ENCODE measurements at regions of chr18 and their contacts with region 1.

Region 1: GRCh38 chr18:21612125-21612991 is at the start of gene SNRPD1:
- DNase-seq: peak; percentile 73 to 94 (median 86)
- ATAC-seq: peak; percentile 99
- H3K4me3 ChIP-seq: peak within 1 kb of the TSS; percentile 85
- H3K4me3 Mint-ChIP-seq: peak within 1 kb of the TSS; percentile 100
- H3K27ac ChIP-seq: peak within 1 kb of the TSS; percentile 86 to 90
- H3K27ac Mint-ChIP-seq: peak within 1 kb of the TSS; percentile 94
- H3K4me1 ChIP-seq: peaks cover 26% of the 10 kb centered on the region
- H3K4me1 Mint-ChIP-seq: peaks cover 44% of the 10 kb centered on the region
- H3K27me3 ChIP-seq: no peaks in the 10 kb centered on the region
- H3K27me3 Mint-ChIP-seq: no peaks in the 10 kb centered on the region
- CTCF ChIP-seq: peak; percentile 86
- total RNA-seq, gene SNRPD1: 35.7 to 38.9 TPM

Region 2: GRCh38 chr18:21682371-21683051 is 70.2 kb after region 1 on chr18:
- CTCF ChIA-PET with region 1: interaction called, 3 read pairs
- POLR2A ChIA-PET with region 1: interaction called, 11 read pairs
- intact Hi-C with region 1: no loop called
- DNase-seq: peak in 8 of 14 experiments; percentile 2 to 73 (median 28)
- ATAC-seq: peak; percentile 87
- H3K4me3 ChIP-seq: peak overlapping the region; percentile 57
- H3K4me3 Mint-ChIP-seq: no peak overlapping the region
- H3K27ac ChIP-seq: peak overlapping the region; percentile 47 to 87
- H3K27ac Mint-ChIP-seq: no peak overlapping the region
- H3K4me1 ChIP-seq: peaks cover 14% of the 10 kb centered on the region
- H3K4me1 Mint-ChIP-seq: peaks cover 28% of the 10 kb centered on the region
- H3K27me3 ChIP-seq: no peaks in the 10 kb centered on the region
- H3K27me3 Mint-ChIP-seq: no peaks in the 10 kb centered on the region
- CTCF ChIP-seq: no peak

Region 3: DNA sequence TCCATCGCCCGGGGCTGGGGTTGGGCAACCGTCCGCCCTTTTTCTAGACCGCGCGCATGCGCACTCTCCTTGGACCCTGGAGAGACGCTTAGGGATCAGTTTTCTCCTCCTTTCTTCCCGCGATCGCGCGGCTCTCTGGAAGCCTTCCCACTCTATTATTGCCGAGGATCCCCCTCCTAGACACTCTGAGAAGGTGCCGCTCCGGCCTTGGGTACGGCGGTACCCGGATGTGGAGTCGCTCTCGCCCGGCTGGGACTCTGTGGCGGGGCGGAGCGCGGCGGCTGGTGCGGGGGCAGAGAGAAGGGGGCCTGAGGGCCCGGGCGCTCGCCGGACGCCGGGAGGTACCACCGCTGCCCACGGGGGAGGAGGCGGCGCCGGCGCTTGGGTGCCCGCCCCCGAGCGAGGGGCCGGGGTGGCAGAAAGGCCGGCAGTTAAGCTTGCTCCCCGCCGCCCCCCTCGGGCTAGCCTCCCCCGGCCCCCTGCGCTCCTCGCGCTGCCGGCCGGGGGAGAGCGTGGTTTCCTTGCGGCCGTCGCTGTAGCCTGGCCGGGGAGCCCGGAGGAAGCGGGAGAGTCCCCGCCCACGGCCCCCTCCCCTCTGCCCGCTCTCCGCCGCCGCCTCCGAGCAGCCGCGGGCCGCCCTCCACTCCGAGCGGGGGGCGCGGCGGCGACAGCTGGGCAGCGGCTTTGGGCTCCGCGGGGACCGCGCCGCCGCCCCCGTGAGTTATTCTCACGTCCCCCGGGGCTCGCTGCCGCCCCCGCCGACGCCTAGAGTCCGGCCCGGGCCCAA is 128.6 kb after region 1 on chr18 and contains the start of gene MIB1:
- CTCF ChIA-PET with region 1: interaction called, 6 read pairs
- POLR2A ChIA-PET with region 1: interaction called, 27 read pairs
- intact Hi-C with region 1: loop called in 1 of 2 experiments (anchors 5 kb)
- DNase-seq: peak in 11 of 14 experiments; percentile 25 to 99 (median 76)
- ATAC-seq: peak; percentile 57
- H3K4me3 ChIP-seq: peak within 1 kb of the TSS; percentile 94
- H3K4me3 Mint-ChIP-seq: peak within 1 kb of the TSS; percentile 98
- H3K27ac ChIP-seq: peak within 1 kb of the TSS; percentile 87 to 95
- H3K27ac Mint-ChIP-seq: peak within 1 kb of the TSS; percentile 93
- H3K4me1 ChIP-seq: peaks cover 34% of the 10 kb centered on the region
- H3K4me1 Mint-ChIP-seq: peaks cover 44% of the 10 kb centered on the region
- H3K27me3 ChIP-seq: no peaks in the 10 kb centered on the region
- H3K27me3 Mint-ChIP-seq: no peaks in the 10 kb centered on the region
- CTCF ChIP-seq: no peak
- total RNA-seq, gene MIB1: 13.6 to 15.3 TPM

Region 4: DNA sequence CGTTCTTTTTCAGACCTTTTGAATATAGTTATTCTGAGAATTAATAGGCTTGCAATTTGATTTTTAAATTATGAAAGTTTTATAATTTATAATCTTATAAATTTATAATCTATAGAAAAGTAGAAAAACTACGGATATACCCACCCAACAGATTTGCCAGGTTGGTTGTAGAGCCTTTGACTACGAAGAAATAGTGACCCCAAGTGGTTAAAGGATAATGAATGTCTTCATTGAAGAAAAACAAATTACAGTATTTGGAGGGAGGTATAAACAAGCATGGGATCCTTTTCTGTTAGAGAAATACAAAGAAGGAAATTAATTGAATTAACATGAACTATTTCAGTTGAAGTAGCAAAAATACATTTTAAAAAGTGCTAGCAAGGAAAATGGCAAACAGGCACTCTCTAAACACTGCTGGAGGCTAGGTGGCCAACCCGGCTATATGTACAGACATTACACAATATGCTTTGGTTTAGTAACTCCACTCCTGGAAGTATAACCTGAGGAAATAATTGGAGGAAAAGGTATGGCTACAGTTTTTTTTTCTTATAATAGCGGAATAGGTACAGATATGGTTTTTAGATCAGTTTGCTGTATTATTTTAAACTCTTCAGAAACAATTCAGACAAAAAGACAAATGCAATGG is 239.1 kb after region 1 on chr18:
- CTCF ChIA-PET with region 1: interaction called, 3 read pairs
- POLR2A ChIA-PET with region 1: no interaction called
- intact Hi-C with region 1: loop called in 1 of 2 experiments (anchors 10 kb)
- DNase-seq: peak in 2 of 14 experiments; percentile 18 to 24
- ATAC-seq: no peak
- H3K4me3 ChIP-seq: no peak overlapping the region
- H3K4me3 Mint-ChIP-seq: no peak overlapping the region
- H3K27ac ChIP-seq: no peak overlapping the region
- H3K27ac Mint-ChIP-seq: no peak overlapping the region
- H3K4me1 ChIP-seq: no peaks in the 10 kb centered on the region
- H3K4me1 Mint-ChIP-seq: peaks cover 5% of the 10 kb centered on the region
- H3K27me3 ChIP-seq: no peaks in the 10 kb centered on the region
- H3K27me3 Mint-ChIP-seq: no peaks in the 10 kb centered on the region
- CTCF ChIP-seq: peak; percentile 41